HCT116 (cell line): ENCODE measurements at regions of chr10 and their contacts with region 1.

Region 1: DNA sequence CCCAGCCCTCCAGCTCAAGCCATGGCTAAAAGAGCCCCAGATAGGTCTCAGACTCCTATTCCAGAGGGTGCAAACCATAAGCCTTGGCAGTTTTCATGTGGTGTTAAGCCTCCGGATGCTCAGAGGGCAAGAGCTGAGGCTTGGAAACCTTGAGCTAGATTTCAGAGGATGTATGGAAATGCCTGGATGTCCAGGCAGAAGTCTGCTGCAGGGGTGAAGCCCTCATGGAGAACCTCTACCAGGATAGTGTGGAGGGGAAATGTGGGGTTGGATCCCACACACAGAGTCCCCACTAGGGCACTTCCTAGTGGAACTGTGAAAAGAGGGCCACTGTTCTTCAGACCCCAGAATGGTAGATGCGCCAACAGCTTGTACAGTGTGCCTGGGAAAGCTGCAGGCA is 13.2 kb upstream of the HPSE2 start:
- DNase-seq: no peak
- ATAC-seq: no peak
- H3K4me3 ChIP-seq: no peak overlapping the region
- H3K27ac ChIP-seq: no peak overlapping the region
- H3K4me1 ChIP-seq: no peaks in the 10 kb centered on the region
- H3K27me3 ChIP-seq: no peaks in the 10 kb centered on the region
- CTCF ChIP-seq: no peak
- POLR2A ChIP-seq: no peak
- RAD21 ChIP-seq: no peak

Region 2: DNA sequence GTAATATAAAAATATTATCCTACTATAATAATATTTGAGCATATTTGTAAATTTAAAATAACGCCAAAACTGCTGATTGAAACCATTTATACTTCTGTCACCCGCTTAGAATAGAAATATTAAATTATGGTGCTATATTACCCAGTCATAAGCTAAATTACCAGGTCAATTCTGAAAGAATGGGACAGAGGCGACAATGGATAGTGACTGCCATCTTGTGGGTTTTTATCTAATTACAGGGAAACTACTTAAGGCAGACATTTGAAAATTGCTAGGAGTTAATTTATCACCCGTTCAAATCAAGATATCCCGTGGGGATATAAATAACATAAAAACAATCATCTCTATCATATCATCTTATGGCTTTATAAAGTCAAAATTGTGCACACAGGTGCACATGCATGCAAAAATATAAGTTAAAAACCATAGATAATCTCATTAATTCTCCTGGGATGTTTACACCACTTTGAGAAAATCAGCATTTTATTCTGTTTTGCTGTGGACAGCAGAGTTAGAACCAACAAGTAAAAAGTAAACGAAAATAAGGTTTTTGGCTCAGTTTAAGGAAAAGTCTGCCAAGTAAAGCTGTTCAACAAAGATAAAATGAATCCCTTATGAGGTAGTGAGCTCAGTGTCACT is 28.1 kb after region 1 on chr10:
- CTCF ChIA-PET with region 1: interaction called, 10 read pairs
- POLR2A ChIA-PET with region 1: interaction called, 3 read pairs
- RAD21 ChIA-PET with region 1: no interaction called
- intact Hi-C with region 1: no loop called
- DNase-seq: peak; percentile 46
- ATAC-seq: peak; percentile 81
- H3K4me3 ChIP-seq: no peak overlapping the region
- H3K27ac ChIP-seq: no peak overlapping the region
- H3K4me1 ChIP-seq: no peaks in the 10 kb centered on the region
- H3K27me3 ChIP-seq: peaks cover 15% of the 10 kb centered on the region
- CTCF ChIP-seq: peak; percentile 60 to 86 (median 65); a peak in 5 of 6 replicates
- POLR2A ChIP-seq: no peak
- RAD21 ChIP-seq: peak; percentile 85

Region 3: GRCh38 chr10:99435986-99436638 is 187.3 kb after region 1 on chr10:
- CTCF ChIA-PET with region 1: no interaction called
- POLR2A ChIA-PET with region 1: no interaction called
- RAD21 ChIA-PET with region 1: no interaction called
- intact Hi-C with region 1: no loop called
- DNase-seq: peak; percentile 44
- ATAC-seq: peak; percentile 58
- H3K4me3 ChIP-seq: no peak overlapping the region
- H3K27ac ChIP-seq: no peak overlapping the region
- H3K4me1 ChIP-seq: peaks cover 5 to 14% of the 10 kb centered on the region in 2 experiments; a peak in 3 of 4 replicates
- H3K27me3 ChIP-seq: no peaks in the 10 kb centered on the region
- CTCF ChIP-seq: peak; percentile 42 to 80 (median 75); a peak in 4 of 6 replicates
- POLR2A ChIP-seq: no peak
- RAD21 ChIP-seq: peak; percentile 75